HEK293T (cell line): ENCODE measurements at regions of chr1 and their contacts with region 1.

Region 1: GRCh38 chr1:225987491-225988316 is 11.4 kb downstream of the SDE2 start:
- DNase-seq: no peak

Region 2: DNA sequence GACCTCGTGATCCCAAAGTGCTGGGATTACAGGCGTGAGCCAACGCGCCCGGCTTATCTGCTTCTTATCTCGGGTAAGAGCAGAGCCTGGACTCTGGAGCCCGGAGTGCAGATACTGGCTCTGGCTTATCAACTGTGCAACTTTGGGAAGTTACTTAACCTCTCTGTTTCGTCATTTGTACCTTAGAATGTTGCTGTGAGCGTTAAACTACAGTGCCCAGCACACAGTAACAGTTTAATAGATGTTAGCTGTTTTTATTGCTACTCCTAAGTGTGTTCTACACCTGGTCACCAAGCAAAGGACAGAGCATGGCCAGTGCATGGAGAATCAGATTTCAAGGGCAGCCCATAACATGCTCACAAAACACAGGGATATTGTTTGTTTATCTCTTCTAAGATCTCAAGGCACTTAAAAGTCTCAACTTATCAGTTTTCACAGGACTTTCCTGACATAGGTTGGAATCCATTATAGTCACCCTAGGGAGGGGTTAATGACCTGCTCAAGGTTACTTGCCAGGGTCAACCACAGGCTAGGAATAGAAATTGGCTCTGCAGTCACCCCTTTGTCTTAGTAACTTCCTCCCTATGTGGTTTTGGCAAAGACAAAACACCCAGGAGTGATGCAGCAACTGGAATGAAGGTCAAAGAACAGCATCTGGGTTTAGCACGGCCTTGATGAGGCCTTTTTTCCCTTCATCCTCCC is 232.6 kb before region 1 on chr1:
- CTCF ChIA-PET with region 1: no interaction called
- POLR2A ChIA-PET with region 1: no interaction called
- DNase-seq: no peak

Region 3: DNA sequence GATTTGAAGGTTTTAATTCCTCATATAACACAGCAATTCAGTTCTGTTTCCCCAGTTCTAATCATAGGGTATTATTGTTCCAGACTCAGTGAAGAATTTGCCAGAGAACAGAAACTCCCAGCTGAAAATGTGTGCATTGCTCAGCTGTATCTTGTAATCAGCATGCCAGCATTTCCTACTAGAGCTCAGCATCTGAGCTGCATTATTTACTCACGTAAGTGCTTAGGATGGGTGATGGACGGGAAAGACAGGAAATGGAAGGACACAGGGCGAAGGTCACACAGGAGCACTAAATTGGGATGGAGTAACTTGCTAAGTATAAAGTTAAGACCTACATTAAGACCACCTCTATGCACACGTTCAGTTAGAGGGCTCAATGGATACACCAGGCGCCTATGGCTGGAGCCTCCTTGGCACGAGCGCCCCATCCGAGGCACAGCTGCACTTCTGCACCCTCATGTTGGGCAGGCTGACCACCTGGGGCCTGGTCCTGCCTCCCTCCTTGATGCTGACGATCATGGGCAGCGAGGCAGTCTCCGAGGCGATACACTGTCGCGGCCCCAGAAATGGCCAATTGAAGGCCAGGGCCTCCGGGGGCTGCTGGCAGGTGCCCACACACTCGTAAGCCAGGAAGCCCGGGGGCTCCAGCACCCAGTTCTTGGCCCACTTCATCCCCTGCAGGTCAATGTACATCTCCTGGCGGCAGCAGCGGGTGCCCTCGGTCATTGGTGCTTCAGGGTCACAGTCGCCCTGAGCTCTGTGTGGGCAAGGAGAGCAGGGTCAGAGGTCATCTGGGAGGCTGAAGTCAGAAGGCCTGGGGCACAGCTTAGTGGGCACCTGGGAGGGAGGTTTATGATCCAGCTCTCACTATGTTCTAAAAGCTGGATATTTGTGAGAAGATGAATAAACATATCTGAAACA is 50.4 kb before region 1 on chr1:
- CTCF ChIA-PET with region 1: no interaction called
- POLR2A ChIA-PET with region 1: no interaction called
- DNase-seq: no peak

Region 4: GRCh38 chr1:225999227-225999911 is 11.7 kb after region 1 on chr1 and contains the start of gene SDE2:
- CTCF ChIA-PET with region 1: interaction called, 23 read pairs
- POLR2A ChIA-PET with region 1: interaction called, 13 read pairs
- DNase-seq: peak; percentile 100